ENCODE measurements at regions of chr15 and their contacts with region 1.

Region 1: DNA sequence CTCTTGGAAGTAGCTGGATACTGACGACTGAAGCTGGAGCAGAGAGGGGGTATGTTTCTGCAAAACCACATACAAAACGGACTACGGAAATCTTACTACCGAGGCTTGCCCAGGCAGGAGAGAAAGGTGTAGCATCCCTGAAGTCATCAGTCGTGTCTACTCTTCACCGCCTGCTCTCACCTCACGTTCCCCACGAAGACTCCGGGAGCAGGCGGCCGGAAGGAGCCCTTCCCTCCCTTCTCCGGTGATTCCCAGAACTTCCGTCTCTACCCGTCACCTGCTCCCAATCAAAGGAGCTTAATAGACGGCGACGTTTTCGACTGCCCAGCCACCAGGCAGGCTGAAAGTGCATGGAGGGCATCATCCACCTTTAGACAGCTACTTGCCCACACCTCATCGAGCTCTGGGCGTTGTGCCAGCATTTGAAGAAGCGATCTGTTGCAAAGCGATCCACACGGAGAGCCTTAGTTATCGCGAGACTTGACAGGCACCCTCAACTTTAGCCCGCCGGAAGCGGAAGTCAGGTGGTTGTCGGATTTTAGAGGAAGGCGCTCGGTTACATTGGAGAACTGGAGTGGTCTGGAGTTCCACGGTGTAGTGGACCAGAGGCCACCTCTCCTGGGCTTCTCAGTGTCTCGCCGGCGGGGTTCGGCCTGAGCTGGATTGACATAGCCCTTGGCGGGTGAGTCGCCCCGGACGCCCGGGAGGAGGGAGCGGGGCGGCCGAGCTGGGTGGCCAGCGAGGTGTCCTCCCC is at the start of gene RAMAC:
- DNase-seq: peak; percentile 97
- H3K4me3 Mint-ChIP-seq: peak within 1 kb of the TSS; percentile 97
- H3K27ac Mint-ChIP-seq: peak within 1 kb of the TSS; percentile 95
- H3K4me1 Mint-ChIP-seq: peaks cover 27% of the 10 kb centered on the region
- H3K27me3 Mint-ChIP-seq: no peaks in the 10 kb centered on the region
- total RNA-seq, gene RAMAC: 23.9 and 26.4 TPM in 2 replicates

Region 2: GRCh38 chr15:82540055-82540983 is 445.5 kb before region 1 on chr15 and contains the start of gene RPS17:
- intact Hi-C with region 1: loop called (anchors 5 kb)
- DNase-seq: peak; percentile 100
- H3K4me3 Mint-ChIP-seq: peak within 1 kb of the TSS; percentile 86
- H3K27ac Mint-ChIP-seq: peak within 1 kb of the TSS; percentile 92
- H3K4me1 Mint-ChIP-seq: peaks cover 34% of the 10 kb centered on the region
- H3K27me3 Mint-ChIP-seq: peaks cover 9% of the 10 kb centered on the region
- total RNA-seq, gene RPS17: 2,675 and 2,728 TPM in 2 replicates

Region 3: GRCh38 chr15:82749951-82750830 is 235.7 kb before region 1 on chr15:
- intact Hi-C with region 1: loop called (anchors 2 kb)
- DNase-seq: peak; percentile 96
- H3K4me3 Mint-ChIP-seq: peak overlapping the region; percentile 99
- H3K27ac Mint-ChIP-seq: peak overlapping the region; percentile 97
- H3K4me1 Mint-ChIP-seq: peaks cover 23% of the 10 kb centered on the region
- H3K27me3 Mint-ChIP-seq: no peaks in the 10 kb centered on the region

Region 4: GRCh38 chr15:82849556-82850512 is 136.0 kb before region 1 on chr15:
- intact Hi-C with region 1: loop called (anchors 5 kb)
- DNase-seq: peak; percentile 88
- H3K4me3 Mint-ChIP-seq: no peak overlapping the region
- H3K27ac Mint-ChIP-seq: no peak overlapping the region
- H3K4me1 Mint-ChIP-seq: peaks cover 11% of the 10 kb centered on the region
- H3K27me3 Mint-ChIP-seq: peaks cover 9% of the 10 kb centered on the region

Region 5: DNA sequence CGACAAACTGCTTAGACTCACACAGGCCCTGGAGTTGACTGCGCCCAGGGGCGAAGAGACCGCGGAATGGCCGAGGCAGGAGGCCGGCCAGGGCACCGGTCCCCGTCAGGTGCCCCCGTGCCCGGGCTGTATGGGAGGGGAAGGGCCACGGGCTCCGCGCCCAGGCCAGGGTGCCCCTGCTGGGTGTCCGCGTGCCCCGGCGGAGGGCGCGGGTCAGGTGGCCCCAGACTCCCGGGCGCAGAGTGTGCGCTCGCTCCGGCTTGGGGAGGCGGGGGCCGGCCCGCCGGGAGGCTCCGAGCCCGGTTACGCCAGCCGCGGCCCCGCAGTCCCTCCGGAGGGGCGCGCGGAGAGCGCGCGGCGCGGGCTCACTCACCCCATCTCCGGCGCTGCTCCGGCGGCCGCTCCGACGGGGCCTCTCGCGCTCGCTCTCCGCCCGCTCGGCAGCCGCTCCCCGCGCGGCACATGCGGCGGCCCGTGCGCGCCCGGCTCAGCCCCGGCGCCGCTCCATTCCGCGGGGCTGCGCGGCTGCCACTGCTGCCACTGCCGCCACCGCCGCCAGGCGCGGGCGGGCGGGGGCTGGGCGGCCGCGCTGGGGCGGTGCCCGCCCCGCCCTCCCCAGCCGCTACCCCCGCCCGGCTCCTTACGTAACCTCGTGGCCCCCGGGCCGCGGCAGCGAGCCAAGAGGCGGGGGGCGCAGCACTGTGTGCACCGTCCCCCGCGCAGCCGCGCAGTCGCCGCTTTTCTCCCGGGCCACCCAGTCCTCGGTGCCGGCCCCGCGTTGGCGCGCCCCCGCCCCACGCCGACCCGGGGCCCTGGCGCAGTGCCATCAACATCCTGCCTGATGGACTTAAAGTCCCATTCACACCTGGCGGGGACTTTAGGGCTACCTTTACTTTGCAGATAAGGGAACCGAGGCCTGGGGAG is 33.4 kb before region 1 on chr15 and contains the start of gene HOMER2:
- intact Hi-C with region 1: loop called (anchors 5 kb)
- DNase-seq: peak; percentile 75
- H3K4me3 Mint-ChIP-seq: peak within 1 kb of the TSS; percentile 67
- H3K27ac Mint-ChIP-seq: peak within 1 kb of the TSS; percentile 80
- H3K4me1 Mint-ChIP-seq: peaks cover 2% of the 10 kb centered on the region
- H3K27me3 Mint-ChIP-seq: peaks cover 19% of the 10 kb centered on the region
- total RNA-seq, gene HOMER2: 29.3 and 32.1 TPM in 2 replicates

Region 6: GRCh38 chr15:82999905-83000671 is 14.2 kb after region 1 on chr15:
- intact Hi-C with region 1: loop called (anchors 2 kb)
- DNase-seq: peak; percentile 84
- H3K4me3 Mint-ChIP-seq: peak overlapping the region; percentile 73
- H3K27ac Mint-ChIP-seq: no peak overlapping the region
- H3K4me1 Mint-ChIP-seq: peaks cover 6% of the 10 kb centered on the region
- H3K27me3 Mint-ChIP-seq: no peaks in the 10 kb centered on the region

Region 7: GRCh38 chr15:83278173-83278572 is 292.3 kb after region 1 on chr15:
- intact Hi-C with region 1: no loop called
- DNase-seq: no peak
- H3K4me3 Mint-ChIP-seq: no peak overlapping the region
- H3K27ac Mint-ChIP-seq: no peak overlapping the region
- H3K4me1 Mint-ChIP-seq: peaks cover 4% of the 10 kb centered on the region
- H3K27me3 Mint-ChIP-seq: peaks cover 60% of the 10 kb centered on the region